ENCODE measurements at regions of chr12 and their contacts with region 1.

Region 1: DNA sequence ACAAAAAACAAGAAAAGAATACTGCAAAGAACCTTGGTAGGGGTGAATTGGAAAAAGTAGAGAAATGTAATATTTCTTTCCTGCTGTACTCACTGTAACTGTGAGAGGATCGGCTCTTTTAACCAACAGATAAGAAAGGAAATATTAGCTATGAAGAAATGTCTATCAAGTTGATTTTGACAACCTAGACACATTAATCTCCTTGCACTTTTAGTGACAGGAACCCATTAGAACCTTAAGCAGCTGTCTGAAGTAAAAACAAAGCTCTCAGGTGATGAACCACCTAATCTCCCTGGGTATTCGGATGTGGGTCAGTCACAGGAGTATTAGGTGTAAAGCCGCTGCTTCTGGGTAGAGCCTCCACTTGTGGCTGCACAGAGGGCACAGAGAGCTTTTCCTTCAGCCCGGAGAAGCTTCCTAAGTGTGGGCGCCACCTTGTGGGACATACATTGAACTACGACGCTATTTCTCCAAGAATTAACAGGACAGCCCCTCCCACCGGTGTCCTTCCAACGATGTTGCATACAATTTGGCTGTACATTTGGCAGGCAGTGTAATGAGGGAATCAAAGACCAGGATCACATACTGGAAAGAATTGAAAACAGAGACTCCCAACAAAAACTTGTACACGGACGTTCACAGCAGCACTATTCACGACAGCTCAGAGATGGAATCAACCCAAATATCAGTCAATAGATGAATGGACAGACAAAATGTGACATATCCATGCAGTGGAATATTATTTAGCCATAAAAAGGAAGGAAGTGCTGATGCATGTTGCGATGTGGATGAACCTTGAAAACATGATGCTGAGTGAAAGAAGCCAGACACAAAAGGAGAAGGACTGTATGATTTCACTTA is 28.9 kb upstream of the MAPKAPK5 start:
- DNase-seq: peak; percentile 91
- H3K4me3 ChIP-seq: no peak overlapping the region
- H3K27ac ChIP-seq: no peak overlapping the region
- H3K4me1 ChIP-seq: peaks cover 0 to 6% (median 0%) of the 10 kb centered on the region in 4 donors
- H3K27me3 ChIP-seq: no peaks in the 10 kb centered on the region
- CTCF ChIP-seq: peak; percentile 78 to 90 (median 80)
- EP300 ChIP-seq: no peak
- POLR2A ChIP-seq: no peak

Region 2: GRCh38 chr12:111471236-111471635 is 341.9 kb before region 1 on chr12:
- intact Hi-C with region 1: no loop called
- DNase-seq: no peak
- H3K4me3 ChIP-seq: no peak overlapping the region
- H3K27ac ChIP-seq: no peak overlapping the region
- H3K4me1 ChIP-seq: peaks cover 0 to 9% (median 7%) of the 10 kb centered on the region in 4 donors
- H3K27me3 ChIP-seq: no peaks in the 10 kb centered on the region
- CTCF ChIP-seq: no peak
- EP300 ChIP-seq: no peak
- POLR2A ChIP-seq: no peak

Region 3: GRCh38 chr12:111753144-111753881 is 59.8 kb before region 1 on chr12:
- intact Hi-C with region 1: loop called (anchors 1 kb)
- DNase-seq: peak; percentile 84
- H3K4me3 ChIP-seq: no peak overlapping the region
- H3K27ac ChIP-seq: no peak overlapping the region
- H3K4me1 ChIP-seq: peaks cover 0 to 19% (median 10%) of the 10 kb centered on the region in 4 donors
- H3K27me3 ChIP-seq: no peaks in the 10 kb centered on the region
- CTCF ChIP-seq: peak; percentile 64 to 87 (median 81)
- EP300 ChIP-seq: no peak
- POLR2A ChIP-seq: no peak

Region 4: GRCh38 chr12:111766608-111767361 is 46.3 kb before region 1 on chr12 and contains the start of gene ALDH2:
- intact Hi-C with region 1: loop called (anchors 5 kb)
- DNase-seq: peak; percentile 91
- H3K4me3 ChIP-seq: peak within 1 kb of the TSS; percentile 68 to 94 (median 72)
- H3K27ac ChIP-seq: peak within 1 kb of the TSS; percentile 86 to 91 (median 88)
- H3K4me1 ChIP-seq: peaks cover 0 to 52% (median 41%) of the 10 kb centered on the region in 4 donors
- H3K27me3 ChIP-seq: no peaks in the 10 kb centered on the region
- CTCF ChIP-seq: peak in 1 of 4 experiments; percentile 6
- EP300 ChIP-seq: no peak
- POLR2A ChIP-seq: peak; percentile 66 to 73
- total RNA-seq, gene ALDH2: 112 to 132 (median 126) TPM

Measured in sigmoid colon (tissue), 7 donors.